Mammary epithelial cell (primary cell): ENCODE measurements at regions of chr13 and their contacts with region 1.

Region 1: DNA sequence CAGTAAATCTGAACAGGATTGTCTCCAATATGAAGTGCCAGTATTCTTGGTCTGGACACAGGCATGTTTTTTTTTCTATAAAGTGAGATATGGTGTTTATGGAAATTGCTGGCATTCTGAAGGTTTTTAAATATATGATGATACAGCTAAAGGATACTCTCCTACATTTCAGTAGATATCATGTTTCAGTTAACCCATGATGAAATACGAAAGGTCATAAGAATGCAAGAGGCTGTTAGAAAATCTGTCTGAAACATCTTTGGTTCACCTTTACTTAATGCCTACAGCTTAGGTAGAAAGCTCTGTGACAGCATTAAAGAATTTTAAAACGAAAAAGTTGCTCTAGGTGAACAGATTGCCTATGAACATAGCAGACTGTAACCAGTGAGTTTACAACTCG is 9.1 kb downstream of the FRY start:
- DNase-seq: no peak
- H3K4me3 ChIP-seq: no peak overlapping the region
- H3K27ac ChIP-seq: no peak overlapping the region
- H3K4me1 ChIP-seq: no peaks in the 10 kb centered on the region
- H3K27me3 ChIP-seq: no peaks in the 10 kb centered on the region
- CTCF ChIP-seq: no peak

Region 2: DNA sequence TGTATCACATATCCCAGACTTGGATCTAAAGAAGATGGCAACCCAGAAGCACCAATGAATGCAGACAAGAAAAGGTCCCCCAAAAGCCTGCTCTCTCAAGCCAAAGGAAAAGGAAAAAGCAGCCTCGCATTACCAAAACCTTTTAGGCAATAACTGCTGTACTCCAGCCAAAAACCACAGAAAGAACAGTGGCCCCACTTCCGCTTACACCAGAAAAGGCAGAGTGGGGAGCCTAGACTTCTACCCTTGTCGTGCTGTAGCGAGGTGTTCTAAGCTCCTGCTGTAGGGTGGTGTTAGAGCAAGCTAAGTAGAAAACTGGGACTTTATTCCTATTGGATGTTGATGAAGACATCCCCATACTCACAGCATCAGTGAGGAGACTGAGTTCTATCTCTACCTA is 545.4 kb before region 1 on chr13:
- CTCF ChIA-PET with region 1: no interaction called
- dilution Hi-C with region 1: no loop called
- in situ Hi-C with region 1: no loop called
- intact Hi-C with region 1: no loop called
- DNase-seq: no peak
- H3K4me3 ChIP-seq: no peak overlapping the region
- H3K27ac ChIP-seq: no peak overlapping the region
- H3K4me1 ChIP-seq: no peaks in the 10 kb centered on the region
- H3K27me3 ChIP-seq: no peaks in the 10 kb centered on the region
- CTCF ChIP-seq: no peak

Region 3: DNA sequence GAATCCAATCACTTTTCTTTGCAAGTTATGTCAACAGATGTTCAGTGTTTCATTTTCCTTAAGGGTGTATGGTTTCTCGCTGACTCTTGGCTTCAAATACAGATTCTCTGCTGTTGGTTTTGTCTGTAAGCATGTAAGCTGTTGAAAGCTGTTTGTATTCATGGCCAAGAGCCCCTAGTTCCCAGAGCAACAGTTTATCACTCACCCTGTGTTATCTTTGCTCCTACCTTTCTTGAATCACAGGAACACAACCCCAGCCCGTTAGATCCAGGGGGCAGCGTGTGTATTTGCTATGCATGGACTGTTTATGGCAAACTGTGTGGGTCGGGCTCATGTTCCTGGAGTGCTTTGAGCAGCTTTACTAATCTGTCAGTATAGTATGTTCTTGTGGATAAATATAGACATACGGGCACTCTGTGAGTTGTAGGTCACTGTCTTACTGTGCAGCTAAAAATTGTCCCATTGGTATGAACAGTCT is 19.8 kb after region 1 on chr13:
- CTCF ChIA-PET with region 1: no interaction called
- dilution Hi-C with region 1: no loop called
- in situ Hi-C with region 1: no loop called
- intact Hi-C with region 1: no loop called
- DNase-seq: no peak
- H3K4me3 ChIP-seq: no peak overlapping the region
- H3K27ac ChIP-seq: no peak overlapping the region
- H3K4me1 ChIP-seq: no peaks in the 10 kb centered on the region
- H3K27me3 ChIP-seq: no peaks in the 10 kb centered on the region
- CTCF ChIP-seq: no peak

Region 4: GRCh38 chr13:32164622-32165268 is 124.1 kb after region 1 on chr13:
- CTCF ChIA-PET with region 1: interaction called, 14 read pairs
- dilution Hi-C with region 1: no loop called
- in situ Hi-C with region 1: no loop called
- intact Hi-C with region 1: no loop called
- DNase-seq: no peak
- H3K4me3 ChIP-seq: no peak overlapping the region
- H3K27ac ChIP-seq: no peak overlapping the region
- H3K4me1 ChIP-seq: peaks cover 6% of the 10 kb centered on the region
- H3K27me3 ChIP-seq: no peaks in the 10 kb centered on the region
- CTCF ChIP-seq: peak; percentile 44 to 61